Panc1 (cell line): ENCODE measurements at regions of chr15 and their contacts with region 1.

Region 1: DNA sequence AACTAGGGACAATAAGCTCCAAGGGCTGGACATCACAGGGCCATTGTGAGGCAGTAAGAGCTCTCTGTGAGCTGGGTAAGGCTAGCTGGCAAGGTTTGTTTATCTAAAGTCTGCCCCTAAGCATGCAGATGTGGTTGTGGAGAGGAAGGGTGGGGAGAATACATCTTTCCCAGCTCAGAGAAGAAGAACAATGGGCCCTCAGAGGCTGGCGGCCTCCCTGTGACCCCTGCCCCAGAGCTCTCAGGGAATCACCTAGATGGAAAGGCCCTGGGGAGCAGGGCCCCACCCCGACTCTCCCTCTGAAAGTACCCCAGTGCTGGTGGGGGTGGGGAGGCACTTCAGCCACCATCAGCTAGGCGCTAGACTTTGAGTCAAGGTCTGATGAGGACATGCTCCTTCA is 4.4 kb upstream of the AP3B2 start:
- DNase-seq: no peak
- ATAC-seq: no peak
- H3K4me3 ChIP-seq: no peak overlapping the region
- H3K27ac ChIP-seq: no peak overlapping the region
- H3K4me1 ChIP-seq: no peaks in the 10 kb centered on the region; the same call in 1 of the 2 replicates
- H3K27me3 ChIP-seq: no peaks in the 10 kb centered on the region; the same call in 1 of the 2 replicates
- CTCF ChIP-seq: no peak

Region 2: GRCh38 chr15:82530606-82531379 is 183.2 kb before region 1 on chr15:
- CTCF ChIA-PET with region 1: no interaction called
- POLR2A ChIA-PET with region 1: no interaction called
- in situ Hi-C with region 1: no loop called
- intact Hi-C with region 1: no loop called
- DNase-seq: peak; percentile 69
- ATAC-seq: peak; percentile 87
- H3K4me3 ChIP-seq: peak overlapping the region in 1 of 2 experiments; percentile 42; a peak in 2 of 4 replicates
- H3K27ac ChIP-seq: peak overlapping the region; percentile 48; the same call in 1 of the 2 replicates
- H3K4me1 ChIP-seq: peaks cover 7% of the 10 kb centered on the region
- H3K27me3 ChIP-seq: no peaks in the 10 kb centered on the region
- CTCF ChIP-seq: peak; percentile 98

Region 3: GRCh38 chr15:82613747-82614146 is 100.3 kb before region 1 on chr15:
- CTCF ChIA-PET with region 1: no interaction called
- POLR2A ChIA-PET with region 1: no interaction called
- in situ Hi-C with region 1: no loop called
- intact Hi-C with region 1: no loop called
- DNase-seq: no peak
- ATAC-seq: no peak
- H3K4me3 ChIP-seq: no peak overlapping the region
- H3K27ac ChIP-seq: no peak overlapping the region
- H3K4me1 ChIP-seq: no peaks in the 10 kb centered on the region
- H3K27me3 ChIP-seq: no peaks in the 10 kb centered on the region
- CTCF ChIP-seq: no peak

Region 4: DNA sequence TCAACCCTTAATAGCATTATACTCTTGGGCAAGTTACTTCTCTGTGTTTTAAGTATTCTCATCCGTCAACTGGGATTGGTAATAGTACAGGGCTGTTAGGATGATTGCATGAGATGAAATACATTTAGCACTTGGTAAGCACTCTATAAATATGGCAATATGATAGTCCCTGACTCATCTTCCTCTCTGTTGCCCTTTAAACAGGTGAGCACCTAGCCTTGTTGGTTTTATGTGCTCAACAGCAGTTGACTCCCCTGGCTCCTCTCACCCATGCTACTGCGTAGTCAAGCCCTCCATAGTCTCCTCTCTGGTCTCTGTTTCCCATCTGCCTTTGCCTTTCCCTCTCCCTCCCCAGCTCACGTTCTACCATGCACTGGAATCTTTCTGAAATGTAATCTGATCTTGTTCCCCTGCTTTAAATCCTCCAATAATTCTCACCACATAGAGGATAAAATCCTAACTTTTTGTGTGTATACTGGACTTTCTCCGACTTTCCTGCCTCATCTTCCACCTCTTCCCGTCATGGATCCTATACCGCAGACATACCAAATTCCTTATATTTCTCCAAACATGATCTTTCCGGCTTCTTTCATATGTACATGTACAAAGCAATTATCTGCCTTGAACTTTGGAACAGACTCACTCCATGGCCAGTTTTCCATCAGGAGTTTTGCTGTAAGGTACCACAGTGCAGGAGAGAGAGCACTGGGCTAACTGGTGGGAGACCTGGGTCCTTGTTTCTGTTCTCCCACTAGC is 49.5 kb after region 1 on chr15:
- CTCF ChIA-PET with region 1: no interaction called
- POLR2A ChIA-PET with region 1: interaction called, 11 read pairs
- in situ Hi-C with region 1: no loop called
- intact Hi-C with region 1: no loop called
- DNase-seq: no peak
- ATAC-seq: no peak
- H3K4me3 ChIP-seq: no peak overlapping the region
- H3K27ac ChIP-seq: no peak overlapping the region
- H3K4me1 ChIP-seq: no peaks in the 10 kb centered on the region
- H3K27me3 ChIP-seq: no peaks in the 10 kb centered on the region
- CTCF ChIP-seq: no peak